ENCODE measurements at regions of chr1 and their contacts with region 1.

Region 1: GRCh38 chr1:205523891-205524793 is 19.7 kb downstream of the CDK18 start:
- H3K4me3 ChIP-seq: no peak overlapping the region
- H3K27ac ChIP-seq: no peak overlapping the region
- H3K4me1 ChIP-seq: peaks cover 8% of the 10 kb centered on the region
- CTCF ChIP-seq: peak; percentile 91

Region 2: DNA sequence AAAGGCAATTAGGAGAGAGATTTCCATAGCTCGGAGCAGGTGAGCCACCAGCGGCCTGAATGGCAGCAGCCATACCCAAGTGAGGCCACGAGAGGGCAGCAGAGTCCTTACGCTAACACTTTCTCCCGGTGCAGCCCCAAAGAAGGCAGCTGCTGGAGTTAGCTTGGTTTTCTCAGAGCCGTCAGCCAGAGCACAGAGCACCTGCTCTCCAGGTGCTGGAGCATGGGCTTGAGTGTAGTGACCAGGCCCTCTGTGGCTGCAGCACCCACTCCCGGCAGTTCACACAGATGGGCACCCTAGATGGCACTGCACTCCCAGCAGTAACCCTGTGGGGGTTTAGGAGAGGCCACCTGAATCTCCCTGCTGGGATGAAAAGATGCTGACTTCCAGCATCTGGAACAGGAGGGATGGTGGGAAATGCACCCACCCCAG is 250.6 kb before region 1 on chr1:
- CTCF ChIA-PET with region 1: interaction called, 19 read pairs
- POLR2A ChIA-PET with region 1: no interaction called
- H3K4me3 ChIP-seq: no peak overlapping the region
- H3K27ac ChIP-seq: no peak overlapping the region
- H3K4me1 ChIP-seq: no peaks in the 10 kb centered on the region
- CTCF ChIP-seq: peak; percentile 93

Region 3: DNA sequence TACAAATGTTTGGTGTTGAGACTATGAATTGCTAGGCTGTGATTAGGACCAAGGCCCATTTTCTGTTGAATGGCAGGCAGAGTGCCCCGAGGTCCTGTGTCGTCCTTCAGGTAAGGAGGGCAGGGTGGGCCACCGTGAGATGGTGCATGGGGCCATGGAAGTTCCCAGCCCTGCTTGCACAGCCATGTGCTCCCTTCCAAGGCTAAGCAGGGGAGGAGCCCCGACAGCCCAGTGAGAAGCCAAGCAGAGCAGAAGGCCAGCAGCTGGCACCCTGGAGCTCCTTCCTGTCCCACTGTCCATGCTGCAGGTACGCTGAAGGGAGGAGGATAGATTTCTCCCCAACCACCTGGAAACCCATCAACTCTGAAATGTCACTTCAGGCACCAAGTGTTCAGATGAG is 194.4 kb before region 1 on chr1:
- CTCF ChIA-PET with region 1: interaction called, 58 read pairs
- POLR2A ChIA-PET with region 1: no interaction called
- H3K4me3 ChIP-seq: no peak overlapping the region
- H3K27ac ChIP-seq: no peak overlapping the region
- H3K4me1 ChIP-seq: no peaks in the 10 kb centered on the region
- CTCF ChIP-seq: no peak

Region 4: DNA sequence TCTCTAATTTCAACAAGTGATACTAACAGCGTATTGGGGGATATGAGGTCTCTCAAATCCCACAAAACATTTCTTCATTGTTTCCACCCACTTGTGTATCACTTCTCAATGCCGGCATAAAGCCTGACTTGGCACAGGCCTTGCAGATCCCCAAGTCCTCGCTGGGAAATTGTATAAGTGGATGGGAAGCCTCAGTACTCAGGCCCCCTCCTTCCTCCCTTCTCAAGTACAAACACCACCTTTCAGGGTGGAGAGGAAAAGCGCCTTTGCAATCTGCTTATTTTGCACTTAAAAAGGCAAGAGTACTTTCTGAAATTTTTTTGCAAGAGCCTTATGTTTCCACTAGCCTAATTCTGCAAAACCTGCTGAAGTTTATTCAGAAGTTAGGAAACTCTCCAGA is 141.6 kb before region 1 on chr1:
- CTCF ChIA-PET with region 1: interaction called, 13 read pairs
- POLR2A ChIA-PET with region 1: no interaction called
- H3K4me3 ChIP-seq: no peak overlapping the region
- H3K27ac ChIP-seq: no peak overlapping the region
- H3K4me1 ChIP-seq: no peaks in the 10 kb centered on the region
- CTCF ChIP-seq: no peak

Region 5: DNA sequence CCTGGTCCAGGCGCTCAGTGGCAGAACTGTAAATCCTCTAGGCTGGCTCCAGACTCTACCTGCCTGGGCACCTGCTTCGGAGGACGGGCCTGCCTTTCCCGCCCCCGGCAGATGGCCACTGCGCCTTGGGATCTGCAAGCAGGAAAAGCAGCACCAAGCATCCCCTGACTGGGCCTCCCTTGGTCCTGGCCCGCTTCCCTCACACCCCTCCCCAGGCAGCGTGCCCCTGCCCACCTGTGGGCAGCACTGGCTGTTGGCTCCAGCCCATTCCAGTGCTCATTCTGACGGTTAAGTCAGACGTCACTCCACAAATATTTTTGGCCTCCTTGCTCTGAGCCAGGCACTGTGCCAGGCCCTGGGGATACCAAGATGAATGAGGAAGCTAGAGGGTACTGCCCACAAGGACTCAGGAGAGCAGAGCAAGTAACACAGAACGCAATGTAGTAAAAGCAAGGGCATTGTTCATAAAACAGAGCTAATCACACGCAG is 46.3 kb before region 1 on chr1:
- CTCF ChIA-PET with region 1: interaction called, 459 read pairs
- POLR2A ChIA-PET with region 1: no interaction called
- H3K4me3 ChIP-seq: no peak overlapping the region
- H3K27ac ChIP-seq: no peak overlapping the region
- H3K4me1 ChIP-seq: no peaks in the 10 kb centered on the region
- CTCF ChIP-seq: no peak

Region 6: DNA sequence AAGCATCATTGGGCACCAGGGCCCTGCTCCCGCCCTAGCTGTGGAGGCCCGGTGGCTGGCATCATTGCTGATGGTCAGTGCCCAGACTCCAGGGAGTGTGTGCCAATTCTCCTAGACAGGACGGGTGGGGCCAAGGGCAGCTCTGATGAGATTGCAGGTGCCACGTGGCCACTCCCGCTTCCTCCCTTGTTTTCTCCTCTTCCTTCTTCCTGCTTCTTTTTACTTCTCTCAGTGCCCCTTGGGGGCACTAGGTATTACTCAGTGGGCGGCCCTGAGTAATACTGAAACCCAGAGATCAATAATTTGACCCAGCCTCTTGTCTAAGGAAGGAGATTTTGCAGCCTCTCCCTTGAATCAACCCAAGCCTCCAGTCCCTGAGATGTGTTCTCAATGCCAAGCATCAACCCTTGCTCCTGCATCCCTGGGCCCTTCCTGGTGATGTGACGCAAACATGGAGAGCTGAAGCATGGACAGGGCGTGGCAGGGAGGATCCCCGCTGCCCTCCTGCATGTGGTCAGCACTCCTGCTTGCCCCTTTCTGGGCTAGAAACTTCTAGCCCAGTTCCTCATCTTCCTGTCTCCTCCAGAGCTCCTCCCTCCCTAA is 12.7 kb after region 1 on chr1:
- CTCF ChIA-PET with region 1: interaction called, 21 read pairs
- POLR2A ChIA-PET with region 1: interaction called, 11 read pairs
- H3K4me3 ChIP-seq: no peak overlapping the region
- H3K27ac ChIP-seq: no peak overlapping the region
- H3K4me1 ChIP-seq: no peaks in the 10 kb centered on the region
- CTCF ChIP-seq: no peak

Region 7: DNA sequence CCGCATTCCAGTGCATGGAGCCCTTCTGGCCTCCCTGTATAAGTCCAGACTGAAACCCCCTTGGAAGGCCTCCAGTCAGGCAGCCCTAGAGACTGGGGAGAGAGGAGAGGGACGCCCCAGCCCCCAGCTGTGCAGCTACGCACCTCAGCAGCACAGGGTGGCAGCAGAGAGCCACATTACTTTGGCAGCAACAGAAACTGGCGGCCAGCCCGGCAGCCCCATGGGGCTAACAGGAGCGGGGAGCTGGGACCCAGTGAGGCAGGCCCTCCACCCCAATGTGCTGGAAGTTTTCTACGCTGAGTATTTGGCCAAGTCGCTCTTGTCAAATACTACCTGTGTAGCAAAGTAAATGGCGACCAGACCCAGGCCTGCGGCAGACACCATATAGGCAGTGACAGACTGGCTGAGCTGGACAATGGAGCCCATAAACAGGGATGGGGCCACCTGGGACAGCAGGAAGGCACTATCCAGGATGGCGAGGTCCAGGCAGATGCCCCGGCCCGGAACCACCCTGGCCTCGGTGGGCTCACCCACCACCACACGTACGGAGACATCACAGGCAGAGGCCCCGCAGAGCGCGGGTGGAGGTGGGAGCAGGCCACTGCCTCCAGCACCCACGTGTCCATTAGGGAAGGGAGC is 134.9 kb after region 1 on chr1:
- CTCF ChIA-PET with region 1: interaction called, 79 read pairs
- POLR2A ChIA-PET with region 1: no interaction called
- H3K4me3 ChIP-seq: no peak overlapping the region
- H3K27ac ChIP-seq: no peak overlapping the region
- H3K4me1 ChIP-seq: no peaks in the 10 kb centered on the region
- CTCF ChIP-seq: peak; percentile 87

Region 8: GRCh38 chr1:205669341-205670149 is 145.4 kb after region 1 on chr1:
- CTCF ChIA-PET with region 1: no interaction called
- POLR2A ChIA-PET with region 1: no interaction called
- H3K4me3 ChIP-seq: no peak overlapping the region
- H3K27ac ChIP-seq: no peak overlapping the region
- H3K4me1 ChIP-seq: no peaks in the 10 kb centered on the region
- CTCF ChIP-seq: no peak

Region 9: GRCh38 chr1:205967555-205968335 is 443.6 kb after region 1 on chr1:
- CTCF ChIA-PET with region 1: no interaction called
- POLR2A ChIA-PET with region 1: no interaction called
- H3K4me3 ChIP-seq: no peak overlapping the region
- H3K27ac ChIP-seq: no peak overlapping the region
- H3K4me1 ChIP-seq: no peaks in the 10 kb centered on the region
- CTCF ChIP-seq: no peak